H1 (cell line): ENCODE measurements at regions of chr17 and their contacts with region 1.

Region 1: DNA sequence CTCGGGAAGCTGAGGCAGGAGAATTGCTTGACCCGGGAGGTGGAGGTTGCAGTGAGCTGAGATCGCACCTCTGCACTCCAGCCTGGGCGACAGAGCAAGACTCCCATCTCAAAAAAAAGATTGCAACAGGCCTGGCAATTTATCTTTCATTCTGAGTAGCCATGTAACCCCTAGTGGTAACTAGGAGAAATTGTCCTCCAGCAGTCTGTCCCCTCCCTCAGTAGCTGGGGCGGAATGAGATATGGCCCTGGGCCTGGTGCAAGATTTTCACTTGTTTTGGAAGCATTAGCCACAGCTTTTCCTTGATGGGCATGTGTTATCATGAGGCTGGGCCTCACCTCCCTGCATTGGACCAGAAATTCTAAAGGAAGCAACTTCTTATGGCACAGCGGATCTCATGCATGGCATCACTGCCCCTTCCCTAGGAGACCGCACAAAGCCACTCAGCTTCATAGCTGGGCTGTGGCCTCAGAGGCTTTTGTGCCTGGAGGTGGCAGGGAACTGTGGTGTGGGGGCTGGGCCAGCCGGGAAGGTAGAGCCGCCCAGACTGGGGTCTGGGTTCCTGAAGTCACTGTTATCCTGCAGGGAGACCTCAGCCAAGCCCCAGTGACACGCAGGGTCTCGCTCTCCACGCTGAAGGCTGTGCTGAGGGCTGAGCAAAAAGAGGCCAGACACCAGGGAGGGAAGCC is 13.4 kb downstream of the NATD1 start:
- DNase-seq: peak in 1 of 2 experiments; percentile 57
- H3K4me3 ChIP-seq: no peak overlapping the region
- H3K27ac ChIP-seq: peak overlapping the region; percentile 8; the same call in 1 of the 2 replicates
- H3K4me1 ChIP-seq: peaks cover 3 to 18% (median 11%) of the 10 kb centered on the region in 4 experiments
- H3K27me3 ChIP-seq: no peaks in the 10 kb centered on the region
- CTCF ChIP-seq: peak; percentile 31 to 63 (median 38)
- EP300 ChIP-seq: no peak
- POLR2A ChIP-seq: no peak
- RAD21 ChIP-seq: peak; percentile 37 to 49

Region 2: GRCh38 chr17:21105064-21105894 is 134.5 kb before region 1 on chr17:
- CTCF ChIA-PET with region 1: no interaction called
- POLR2A ChIA-PET with region 1: no interaction called
- DNase-seq: no peak
- H3K4me3 ChIP-seq: no peak overlapping the region
- H3K27ac ChIP-seq: no peak overlapping the region
- H3K4me1 ChIP-seq: peaks cover 1 to 7% (median 6%) of the 10 kb centered on the region in 4 experiments; a peak in 5 of 7 replicates
- H3K27me3 ChIP-seq: no peaks in the 10 kb centered on the region
- CTCF ChIP-seq: peak in 2 of 3 experiments; percentile 4 to 12; a peak in 1 of 4 replicates
- EP300 ChIP-seq: no peak
- POLR2A ChIP-seq: no peak
- RAD21 ChIP-seq: no peak

Region 3: DNA sequence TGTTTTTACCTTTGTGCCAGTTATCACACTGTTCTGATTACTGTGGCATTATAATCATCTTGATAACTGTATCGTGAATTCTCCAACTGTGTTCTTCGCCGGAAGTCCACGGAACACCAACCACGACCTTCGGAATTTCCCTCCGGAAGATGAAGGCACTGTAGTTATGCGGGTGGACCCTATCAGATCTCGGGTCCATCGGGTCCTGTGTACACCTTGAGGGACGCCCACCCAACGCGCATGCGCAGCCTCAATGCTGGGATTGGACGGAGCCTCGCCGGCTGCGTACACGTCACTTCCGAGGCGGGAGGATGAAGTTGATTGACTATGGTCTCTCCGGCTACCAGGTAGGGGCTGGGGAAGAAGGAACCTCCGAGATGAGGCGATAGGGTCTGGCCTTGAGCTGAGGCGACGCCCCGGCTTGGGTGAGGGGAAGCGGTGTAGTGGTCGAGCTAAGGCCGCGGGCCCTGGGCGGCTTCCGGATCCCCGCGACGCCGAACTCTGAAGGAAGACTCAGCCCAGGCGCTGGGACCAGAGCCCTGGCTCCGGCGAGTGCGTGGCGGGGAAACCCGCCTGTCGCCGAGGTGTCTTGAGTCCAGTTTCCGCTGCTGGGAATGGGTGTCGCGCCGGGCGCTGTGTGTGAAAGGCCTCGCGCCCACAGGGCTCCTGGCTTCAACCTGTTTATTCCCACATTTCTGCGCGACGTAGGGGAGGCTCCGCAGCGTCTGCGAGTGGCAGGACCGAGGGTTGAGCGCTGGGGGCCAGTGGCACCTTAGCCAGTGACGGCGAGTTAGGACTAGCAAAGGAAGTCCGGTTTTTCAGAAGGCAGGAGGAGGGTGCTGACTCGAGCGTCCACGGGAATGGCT is 112.9 kb before region 1 on chr17 and contains the start of gene DHRS7B:
- CTCF ChIA-PET with region 1: interaction called, 14 read pairs
- POLR2A ChIA-PET with region 1: interaction called, 4 read pairs
- DNase-seq: peak; percentile 92 to 98
- H3K4me3 ChIP-seq: peak within 1 kb of the TSS; percentile 66 to 84 (median 76)
- H3K27ac ChIP-seq: peak within 1 kb of the TSS; percentile 87
- H3K4me1 ChIP-seq: peaks cover 0 to 4% (median 2%) of the 10 kb centered on the region in 4 experiments; a peak in 4 of 7 replicates
- H3K27me3 ChIP-seq: no peaks in the 10 kb centered on the region; a peak in 1 of 7 replicates
- CTCF ChIP-seq: no peak
- EP300 ChIP-seq: no peak
- POLR2A ChIP-seq: peak in 1 of 2 experiments; percentile 90; a peak in 2 of 3 replicates
- RAD21 ChIP-seq: no peak; a peak in 1 of 4 replicates
- total RNA-seq, gene DHRS7B: 11.0 and 12.4 TPM in 2 replicates

Region 4: GRCh38 chr17:21199299-21199698 is 40.5 kb before region 1 on chr17:
- CTCF ChIA-PET with region 1: interaction called, 18 read pairs
- POLR2A ChIA-PET with region 1: interaction called, 3 read pairs
- DNase-seq: peak in 1 of 2 experiments; percentile 65
- H3K4me3 ChIP-seq: peak overlapping the region in 3 of 4 experiments; percentile 2 to 33 (median 5); a peak in 3 of 8 replicates
- H3K27ac ChIP-seq: peak overlapping the region; percentile 61
- H3K4me1 ChIP-seq: peaks cover 16 to 27% (median 21%) of the 10 kb centered on the region in 4 experiments
- H3K27me3 ChIP-seq: no peaks in the 10 kb centered on the region
- CTCF ChIP-seq: no peak
- EP300 ChIP-seq: no peak
- POLR2A ChIP-seq: no peak
- RAD21 ChIP-seq: no peak

Region 5: DNA sequence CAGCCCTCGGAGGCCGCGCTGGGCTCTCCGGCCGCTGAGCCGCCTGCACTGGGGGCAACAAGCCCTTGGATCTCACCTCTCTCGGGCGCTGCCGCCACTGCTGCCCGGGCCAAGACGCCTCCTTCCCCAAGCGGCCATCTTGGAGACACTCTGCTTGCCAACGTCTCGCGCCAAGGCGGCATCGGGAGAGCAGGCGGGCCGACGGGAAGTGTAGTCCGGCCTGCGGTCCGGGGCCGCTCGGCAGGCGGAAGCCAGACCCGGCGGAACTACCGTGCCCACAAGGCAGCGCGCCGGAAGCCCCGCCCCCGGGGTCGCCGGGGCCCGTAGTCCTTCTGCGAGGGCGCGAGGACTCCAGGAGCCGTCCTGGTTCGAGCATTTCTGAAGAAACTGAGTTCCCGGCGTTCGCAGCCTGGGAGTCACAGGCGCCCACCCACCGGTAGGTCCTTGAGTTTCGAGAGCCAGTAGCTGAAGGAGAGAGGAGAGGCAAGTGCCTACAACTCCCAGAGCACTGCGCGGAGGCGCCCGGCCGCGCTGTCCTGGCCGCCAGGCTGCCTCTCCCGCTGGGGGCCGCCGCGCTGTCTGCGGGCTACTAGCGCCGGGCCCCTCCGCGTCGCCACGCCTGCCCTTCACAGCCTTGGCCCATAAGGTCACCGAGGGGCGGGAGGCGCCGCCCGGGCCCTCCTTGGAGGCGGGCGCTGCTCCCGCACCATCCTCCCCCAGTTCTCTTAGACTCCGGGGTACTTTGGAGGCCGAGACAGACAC is 25.6 kb before region 1 on chr17 and contains the start of gene TMEM11:
- CTCF ChIA-PET with region 1: interaction called, 28 read pairs
- POLR2A ChIA-PET with region 1: interaction called, 8 read pairs
- DNase-seq: peak; percentile 83 to 97
- H3K4me3 ChIP-seq: peak within 1 kb of the TSS; percentile 85 to 97 (median 92)
- H3K27ac ChIP-seq: peak within 1 kb of the TSS; percentile 97
- H3K4me1 ChIP-seq: peaks cover 0 to 14% (median 5%) of the 10 kb centered on the region in 4 experiments; a peak in 4 of 7 replicates
- H3K27me3 ChIP-seq: no peaks in the 10 kb centered on the region
- CTCF ChIP-seq: no peak
- EP300 ChIP-seq: no peak
- POLR2A ChIP-seq: peak; percentile 25 to 61
- RAD21 ChIP-seq: no peak
- total RNA-seq, gene TMEM11: 33.3 and 34.2 TPM in 2 replicates

Region 6: DNA sequence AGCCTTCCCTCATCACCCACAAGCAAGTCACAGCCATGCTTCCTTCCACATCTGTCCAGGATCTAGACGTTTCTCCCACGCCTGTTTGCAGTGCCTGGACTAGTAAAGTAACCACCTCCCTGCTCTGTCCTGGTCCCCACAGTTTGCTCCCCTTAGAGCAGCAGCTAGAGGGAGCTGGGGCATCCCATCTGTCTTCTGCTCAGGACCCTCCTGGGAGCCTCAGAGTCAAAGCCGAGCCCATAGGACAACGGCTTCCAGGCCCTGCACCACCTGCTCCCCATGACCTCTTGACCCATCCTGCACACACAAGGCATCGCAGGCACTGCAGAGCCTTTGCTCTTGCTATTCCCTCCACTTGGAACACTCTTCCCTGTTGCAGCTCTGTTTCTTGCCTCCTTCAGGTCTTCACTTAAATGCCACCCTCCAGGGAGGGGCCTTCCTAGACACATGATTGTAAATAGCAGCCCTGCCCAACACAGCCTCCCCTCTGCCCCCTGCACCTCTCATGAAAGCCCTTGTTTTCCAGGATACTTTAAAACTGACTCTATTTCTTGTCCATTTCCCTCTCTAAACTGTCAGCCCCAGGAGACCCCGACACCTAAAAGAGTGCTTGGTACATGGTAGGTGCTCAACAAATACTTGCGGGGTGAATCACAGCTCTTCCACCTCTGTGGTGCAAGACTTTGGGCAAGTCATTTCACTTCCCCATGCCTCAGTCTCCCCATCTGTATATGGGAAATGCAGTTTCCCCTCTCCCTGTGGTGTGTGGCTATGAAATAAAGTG is 10.3 kb after region 1 on chr17:
- CTCF ChIA-PET with region 1: interaction called, 42 read pairs
- POLR2A ChIA-PET with region 1: interaction called, 5 read pairs
- DNase-seq: no peak
- H3K4me3 ChIP-seq: no peak overlapping the region
- H3K27ac ChIP-seq: no peak overlapping the region
- H3K4me1 ChIP-seq: peaks cover 0 to 12% (median 4%) of the 10 kb centered on the region in 4 experiments; a peak in 5 of 7 replicates
- H3K27me3 ChIP-seq: peaks cover 0 to 6% (median 4%) of the 10 kb centered on the region in 4 experiments; a peak in 2 of 7 replicates
- CTCF ChIP-seq: peak in 1 of 3 experiments; percentile 29; a peak in 1 of 4 replicates
- EP300 ChIP-seq: no peak
- POLR2A ChIP-seq: no peak
- RAD21 ChIP-seq: peak in 1 of 2 experiments; percentile 23; a peak in 2 of 4 replicates

Region 7: DNA sequence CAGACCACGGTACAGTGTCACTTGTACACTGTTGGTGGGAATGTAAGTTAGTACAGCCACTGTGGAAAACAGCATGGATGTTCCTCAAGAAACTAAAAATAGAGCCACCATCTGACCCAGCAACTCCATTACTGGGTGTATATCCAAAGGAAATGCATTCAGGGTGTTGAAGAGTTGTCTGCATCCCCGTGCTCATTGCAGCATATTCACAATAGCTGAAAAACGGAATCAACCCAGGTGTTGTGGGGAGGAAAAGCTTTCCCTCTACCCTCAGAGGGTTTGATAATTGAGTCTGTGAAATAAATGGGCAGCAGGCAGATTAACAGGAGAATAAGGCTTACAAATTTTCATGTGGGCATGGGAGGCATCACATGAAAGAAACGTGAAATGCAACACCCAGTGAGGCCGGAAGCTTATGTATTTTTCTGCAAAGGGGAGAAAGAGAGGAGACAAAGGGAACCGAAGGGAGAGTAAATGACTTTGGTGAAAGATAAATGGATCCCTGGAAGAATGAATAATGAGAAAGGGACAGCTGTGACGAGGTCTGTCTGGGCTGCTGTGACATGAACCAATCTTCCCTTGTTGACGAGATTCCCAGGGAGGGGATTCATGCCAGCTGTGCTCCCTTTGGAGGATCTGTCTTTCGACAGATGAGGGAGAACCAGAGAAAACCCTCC is 242.5 kb after region 1 on chr17:
- CTCF ChIA-PET with region 1: no interaction called
- POLR2A ChIA-PET with region 1: no interaction called
- DNase-seq: no peak
- H3K4me3 ChIP-seq: no peak overlapping the region
- H3K27ac ChIP-seq: no peak overlapping the region
- H3K4me1 ChIP-seq: no peaks in the 10 kb centered on the region; a peak in 1 of 7 replicates
- H3K27me3 ChIP-seq: no peaks in the 10 kb centered on the region
- CTCF ChIP-seq: no peak
- EP300 ChIP-seq: no peak
- POLR2A ChIP-seq: no peak
- RAD21 ChIP-seq: no peak